Ascending aorta (tissue), 2 donors: ENCODE measurements at regions of chr18 and their contacts with region 1.

Region 1: DNA sequence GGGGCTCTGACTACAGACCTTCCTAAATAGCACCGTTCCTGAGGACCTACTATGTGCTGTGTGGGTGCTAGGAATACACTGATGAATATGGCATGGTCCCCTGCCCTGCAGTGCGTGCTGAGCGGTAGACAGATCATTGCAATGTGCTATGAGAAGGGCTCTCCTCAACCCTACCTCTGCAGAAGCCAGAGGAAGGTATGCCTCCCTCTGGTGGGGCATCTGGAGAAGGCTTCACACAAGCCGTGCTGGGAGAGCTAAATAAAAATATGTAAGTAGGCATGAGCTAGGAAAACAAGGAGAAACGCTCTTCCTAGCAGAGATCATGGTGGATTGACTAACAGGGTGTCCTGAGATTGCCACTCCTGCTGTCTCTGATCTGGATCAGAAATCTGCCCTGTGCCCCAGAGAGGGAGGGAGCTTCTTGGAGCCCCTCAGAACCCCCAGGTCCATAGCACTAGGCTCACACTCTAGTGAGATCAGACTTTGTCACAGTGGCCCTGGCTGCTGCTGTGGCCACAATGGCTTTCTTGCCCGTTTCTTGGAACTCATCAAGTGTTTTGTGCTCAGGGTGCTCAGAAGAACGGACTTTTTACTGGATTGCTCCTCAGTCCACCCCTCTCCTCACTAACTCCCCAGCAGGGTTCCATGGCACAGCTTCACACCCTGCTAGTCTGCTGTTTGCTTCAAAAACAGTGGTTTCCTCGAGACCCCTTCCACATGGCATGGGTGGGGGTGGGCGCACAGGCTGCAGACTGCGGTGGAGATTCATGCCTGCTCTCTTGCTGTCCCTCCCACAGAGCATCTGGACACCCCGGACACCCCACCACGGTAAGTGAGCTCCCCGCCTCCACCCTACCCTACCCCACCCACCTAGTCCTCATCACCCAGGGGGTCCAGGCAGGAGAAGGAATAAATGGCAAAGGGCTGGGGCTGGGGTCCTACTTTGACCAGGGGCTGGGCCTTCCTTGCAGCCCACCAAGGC is 14.2 kb downstream of the SIGLEC15 start:
- DNase-seq: no peak
- H3K4me3 ChIP-seq: no peak overlapping the region
- H3K27ac ChIP-seq: no peak overlapping the region
- H3K4me1 ChIP-seq: peaks cover 2 to 14% of the 10 kb centered on the region in 2 donors
- H3K27me3 ChIP-seq: no peaks in the 10 kb centered on the region
- CTCF ChIP-seq: peak; percentile 53 to 72 (median 59)

Region 2: DNA sequence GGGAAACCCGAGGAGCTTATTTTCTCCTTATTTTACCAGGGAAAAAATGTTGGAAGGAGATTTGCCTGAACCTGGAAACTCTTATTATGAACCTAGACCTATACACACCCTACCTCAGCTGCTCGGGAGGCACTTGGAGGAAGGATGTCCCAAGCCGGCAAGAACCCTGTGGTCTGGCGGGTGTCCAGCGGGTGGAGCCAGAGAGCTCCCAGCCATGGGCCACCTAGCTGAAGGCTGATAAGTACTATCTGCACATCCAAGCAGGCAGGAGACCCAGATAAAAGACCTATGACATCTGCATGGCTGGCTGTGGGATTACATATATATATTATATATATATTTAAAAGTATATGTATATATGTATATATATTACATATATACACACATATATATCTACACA is 116.8 kb before region 1 on chr18:
- intact Hi-C with region 1: loop called (anchors 1 kb)
- DNase-seq: peak; percentile 26 to 87
- H3K4me3 ChIP-seq: no peak overlapping the region
- H3K27ac ChIP-seq: no peak overlapping the region
- H3K4me1 ChIP-seq: peaks cover 3 to 4% of the 10 kb centered on the region in 2 donors
- H3K27me3 ChIP-seq: no peaks in the 10 kb centered on the region
- CTCF ChIP-seq: peak; percentile 45 to 76 (median 64)